Activated naive CD4-positive, alpha-beta T cell treated with anti-CD3 and anti-CD28 coated beads for 36 hours (primary cell): ENCODE measurements at regions of chr3 and their contacts with region 1.

Region 1: GRCh38 chr3:46629551-46630517 is 17.5 kb downstream of the FAM240A start:
- DNase-seq: peak; percentile 82
- H3K4me3 Mint-ChIP-seq: peak overlapping the region; percentile 48
- H3K27ac Mint-ChIP-seq: peak overlapping the region; percentile 41
- H3K4me1 Mint-ChIP-seq: peaks cover 17% of the 10 kb centered on the region
- H3K27me3 Mint-ChIP-seq: no peaks in the 10 kb centered on the region

Region 2: GRCh38 chr3:46496741-46497554 is 132.9 kb before region 1 on chr3:
- CTCF ChIA-PET with region 1: interaction called, 20 read pairs
- intact Hi-C with region 1: no loop called
- DNase-seq: peak; percentile 78
- H3K4me3 Mint-ChIP-seq: no peak overlapping the region
- H3K27ac Mint-ChIP-seq: no peak overlapping the region
- H3K4me1 Mint-ChIP-seq: peaks cover 10% of the 10 kb centered on the region
- H3K27me3 Mint-ChIP-seq: no peaks in the 10 kb centered on the region

Region 3: GRCh38 chr3:46558184-46559043 is 71.4 kb before region 1 on chr3:
- CTCF ChIA-PET with region 1: interaction called, 12 read pairs
- intact Hi-C with region 1: loop called (anchors 1 kb)
- DNase-seq: peak; percentile 82
- H3K4me3 Mint-ChIP-seq: peak overlapping the region; percentile 69
- H3K27ac Mint-ChIP-seq: no peak overlapping the region
- H3K4me1 Mint-ChIP-seq: peaks cover 10% of the 10 kb centered on the region
- H3K27me3 Mint-ChIP-seq: peaks cover 3% of the 10 kb centered on the region

Region 4: GRCh38 chr3:46576879-46577278 is 53.0 kb before region 1 on chr3:
- CTCF ChIA-PET with region 1: interaction called, 14 read pairs
- intact Hi-C with region 1: no loop called
- DNase-seq: no peak
- H3K4me3 Mint-ChIP-seq: no peak overlapping the region
- H3K27ac Mint-ChIP-seq: no peak overlapping the region
- H3K4me1 Mint-ChIP-seq: peaks cover 4% of the 10 kb centered on the region
- H3K27me3 Mint-ChIP-seq: no peaks in the 10 kb centered on the region

Region 5: DNA sequence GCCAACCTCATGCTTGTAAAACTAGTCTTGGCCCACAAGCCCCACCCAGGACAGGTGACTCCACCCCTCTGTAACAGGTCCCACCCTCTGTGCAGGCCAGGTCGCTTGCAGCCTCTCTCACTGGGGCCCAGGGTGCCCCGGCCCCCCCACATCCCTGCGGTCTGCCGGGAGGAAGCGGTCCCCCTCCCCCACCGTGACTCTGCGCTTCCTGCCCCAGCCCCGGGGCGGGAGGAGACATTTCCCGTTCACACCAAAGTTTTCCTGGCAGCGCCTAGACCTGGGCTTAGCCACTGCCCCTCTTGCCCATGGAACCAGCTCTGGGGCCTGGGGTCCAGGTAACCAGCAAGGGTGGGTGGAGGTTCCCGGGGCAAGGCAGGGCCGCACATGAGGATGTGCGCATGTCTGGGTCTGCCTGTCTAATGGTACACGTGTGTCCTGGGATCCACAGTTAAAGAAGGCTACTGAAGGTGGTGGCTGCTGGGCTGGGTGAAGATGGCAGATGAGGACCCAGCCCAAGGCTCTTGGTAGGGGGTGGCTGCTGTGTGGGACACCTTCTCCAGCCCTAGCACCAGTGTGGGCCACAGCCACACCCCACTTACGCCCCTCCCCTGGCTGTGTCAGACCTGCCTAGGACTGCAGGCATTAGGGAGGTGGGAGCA is 358.0 kb after region 1 on chr3:
- CTCF ChIA-PET with region 1: no interaction called
- intact Hi-C with region 1: no loop called
- DNase-seq: peak; percentile 94
- H3K4me3 Mint-ChIP-seq: peak overlapping the region; percentile 82
- H3K27ac Mint-ChIP-seq: peak overlapping the region; percentile 89
- H3K4me1 Mint-ChIP-seq: peaks cover 50% of the 10 kb centered on the region
- H3K27me3 Mint-ChIP-seq: no peaks in the 10 kb centered on the region